Dorsolateral prefrontal cortex (tissue), 120 donors: ENCODE measurements at regions of chr6 and their contacts with region 1.

Region 1: GRCh38 chr6:30541515-30542403 is 14.5 kb downstream of the GNL1 start:
- DNase-seq: peak; percentile 57 to 81 (median 72)
- H3K4me3 ChIP-seq: peak overlapping the region; percentile 8 to 66 (median 48)
- H3K27ac ChIP-seq: peak overlapping the region in 11 of 59 donors; percentile 2 to 60 (median 19)
- H3K27me3 ChIP-seq: no peaks in the 10 kb centered on the region
- CTCF ChIP-seq: peak; percentile 84 to 100 (median 97)

Region 2: DNA sequence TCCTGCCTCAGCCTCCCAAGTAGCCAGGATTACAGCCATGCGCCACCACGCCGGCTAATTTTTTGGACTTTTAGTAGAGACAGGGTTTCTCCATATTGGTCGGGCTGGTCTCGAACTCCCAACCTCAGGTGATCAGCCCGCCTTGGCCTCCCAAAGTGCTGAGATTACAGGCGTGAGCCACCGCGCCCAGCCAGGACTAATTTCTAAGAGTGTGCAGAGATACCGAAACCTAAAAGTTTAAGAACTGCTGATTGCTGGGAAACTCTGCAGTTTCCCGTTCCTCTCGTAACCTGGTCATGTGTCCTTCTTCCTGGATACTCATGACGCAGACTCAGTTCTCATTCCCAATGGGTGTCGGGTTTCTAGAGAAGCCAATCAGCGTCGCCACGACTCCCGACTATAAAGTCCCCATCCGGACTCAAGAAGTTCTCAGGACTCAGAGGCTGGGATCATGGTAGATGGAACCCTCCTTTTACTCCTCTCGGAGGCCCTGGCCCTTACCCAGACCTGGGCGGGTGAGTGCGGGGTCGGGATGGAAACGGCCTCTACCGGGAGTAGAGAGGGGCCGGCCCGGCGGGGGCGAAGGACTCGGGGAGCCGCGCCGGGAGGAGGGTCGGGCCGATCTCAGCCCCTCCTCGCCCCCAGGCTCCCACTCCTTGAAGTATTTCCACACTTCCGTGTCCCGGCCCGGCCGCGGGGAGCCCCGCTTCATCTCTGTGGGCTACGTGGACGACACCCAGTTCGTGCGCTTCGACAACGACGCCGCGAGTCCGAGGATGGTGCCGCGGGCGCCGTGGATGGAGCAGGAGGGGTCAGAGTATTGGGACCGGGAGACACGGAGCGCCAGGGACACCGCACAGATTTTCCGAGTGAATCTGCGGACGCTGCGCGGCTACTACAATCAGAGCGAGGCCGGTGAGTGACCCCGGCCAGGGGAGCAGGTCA is 52.4 kb before region 1 on chr6 and contains the start of gene HLA-E:
- intact Hi-C with region 1: loop called (anchors 2 to 5 kb)
- DNase-seq: peak; percentile 43 to 94 (median 85)
- H3K4me3 ChIP-seq: peak within 1 kb of the TSS; percentile 36 to 93 (median 78)
- H3K27ac ChIP-seq: peak within 1 kb of the TSS in 56 of 59 donors; percentile 36 to 97 (median 86)
- H3K27me3 ChIP-seq: peaks cover 0 to 24% (median 0%) of the 10 kb centered on the region in 45 donors
- CTCF ChIP-seq: peak in 7 of 56 donors; percentile 8 to 33 (median 21)
- total RNA-seq, gene HLA-E: 69.4 to 274 (median 123) TPM

Region 3: DNA sequence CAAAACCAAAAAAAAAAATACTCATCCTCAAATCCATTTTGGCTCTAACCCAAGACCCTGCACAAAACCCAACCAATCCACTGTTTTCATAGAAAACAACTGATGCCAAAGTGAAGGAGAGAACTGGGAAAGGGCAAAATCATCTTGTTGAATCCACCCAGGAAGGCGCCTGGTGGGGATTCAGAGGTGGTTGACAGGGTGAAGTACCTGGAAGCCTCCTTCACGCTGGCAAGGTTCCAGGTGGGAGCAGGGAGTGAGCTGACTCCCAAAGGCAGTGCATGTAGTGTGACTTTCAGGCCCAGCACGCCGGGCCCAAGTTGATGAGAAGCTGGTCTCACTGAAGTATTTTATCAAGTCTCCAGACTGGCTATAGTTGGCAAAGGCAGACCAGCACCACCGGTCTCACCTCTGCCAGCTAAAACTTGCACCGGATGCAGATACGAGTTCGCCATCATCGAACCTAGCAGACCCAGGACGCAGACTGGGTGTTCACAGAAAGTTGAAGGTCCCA is 58.7 kb after region 1 on chr6:
- intact Hi-C with region 1: loop called in 1 of 2 experiments (anchors 5 kb)
- DNase-seq: no peak
- H3K4me3 ChIP-seq: no peak overlapping the region
- H3K27ac ChIP-seq: no peak overlapping the region
- H3K27me3 ChIP-seq: no peaks in the 10 kb centered on the region
- CTCF ChIP-seq: no peak